ENCODE measurements at regions of chr20 and their contacts with region 1.

Region 1: DNA sequence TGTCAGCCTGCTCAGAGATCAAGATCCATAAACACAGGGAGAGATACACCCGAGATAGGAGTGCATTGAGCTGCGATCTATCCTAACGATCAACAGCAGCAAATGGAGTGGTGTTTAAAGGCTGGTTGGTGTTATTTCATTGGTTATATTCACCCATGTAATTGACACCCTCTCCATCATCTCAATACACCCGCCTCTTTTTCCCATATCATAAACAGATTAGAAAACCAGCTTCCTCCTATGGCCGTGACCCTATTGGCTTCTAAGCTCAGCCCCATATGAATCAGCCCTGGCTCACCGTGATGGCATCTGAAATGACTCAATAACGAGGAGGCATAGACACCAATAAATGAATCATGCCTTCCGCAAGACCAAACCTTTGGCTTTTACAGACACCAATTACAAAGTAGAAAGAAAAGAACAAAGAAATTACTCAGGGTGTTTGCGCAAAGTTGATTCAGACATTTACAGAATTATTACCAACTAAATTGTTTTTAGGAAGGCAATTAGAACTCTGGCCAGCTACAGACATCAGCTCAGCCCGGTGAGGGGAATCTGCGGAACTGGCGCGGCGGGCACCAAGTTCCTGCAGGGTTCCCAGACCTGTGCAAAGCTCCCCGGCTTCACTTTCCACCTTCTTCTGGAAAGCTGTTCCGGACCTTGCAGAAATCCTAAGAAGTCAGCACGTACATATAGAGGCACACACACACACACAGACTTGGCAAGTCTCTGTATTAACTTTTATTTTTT is 11.5 kb downstream of the PMEPA1 start:
- DNase-seq: no peak
- H3K4me3 ChIP-seq: no peak overlapping the region
- H3K27ac ChIP-seq: no peak overlapping the region
- H3K4me1 ChIP-seq: peaks cover 0 to 14% (median 0%) of the 10 kb centered on the region in 4 experiments
- H3K27me3 ChIP-seq: no peaks in the 10 kb centered on the region

Region 2: GRCh38 chr20:57498425-57499400 is 199.6 kb before region 1 on chr20:
- CTCF ChIA-PET with region 1: no interaction called
- POLR2A ChIA-PET with region 1: no interaction called
- DNase-seq: peak; percentile 49 to 73 (median 64)
- H3K4me3 ChIP-seq: peak overlapping the region in 2 of 7 experiments; percentile 39 to 56
- H3K27ac ChIP-seq: no peak overlapping the region
- H3K4me1 ChIP-seq: peaks cover 11 to 23% (median 14%) of the 10 kb centered on the region in 4 experiments
- H3K27me3 ChIP-seq: peaks cover 9 to 28% (median 15%) of the 10 kb centered on the region in 5 experiments

Region 3: DNA sequence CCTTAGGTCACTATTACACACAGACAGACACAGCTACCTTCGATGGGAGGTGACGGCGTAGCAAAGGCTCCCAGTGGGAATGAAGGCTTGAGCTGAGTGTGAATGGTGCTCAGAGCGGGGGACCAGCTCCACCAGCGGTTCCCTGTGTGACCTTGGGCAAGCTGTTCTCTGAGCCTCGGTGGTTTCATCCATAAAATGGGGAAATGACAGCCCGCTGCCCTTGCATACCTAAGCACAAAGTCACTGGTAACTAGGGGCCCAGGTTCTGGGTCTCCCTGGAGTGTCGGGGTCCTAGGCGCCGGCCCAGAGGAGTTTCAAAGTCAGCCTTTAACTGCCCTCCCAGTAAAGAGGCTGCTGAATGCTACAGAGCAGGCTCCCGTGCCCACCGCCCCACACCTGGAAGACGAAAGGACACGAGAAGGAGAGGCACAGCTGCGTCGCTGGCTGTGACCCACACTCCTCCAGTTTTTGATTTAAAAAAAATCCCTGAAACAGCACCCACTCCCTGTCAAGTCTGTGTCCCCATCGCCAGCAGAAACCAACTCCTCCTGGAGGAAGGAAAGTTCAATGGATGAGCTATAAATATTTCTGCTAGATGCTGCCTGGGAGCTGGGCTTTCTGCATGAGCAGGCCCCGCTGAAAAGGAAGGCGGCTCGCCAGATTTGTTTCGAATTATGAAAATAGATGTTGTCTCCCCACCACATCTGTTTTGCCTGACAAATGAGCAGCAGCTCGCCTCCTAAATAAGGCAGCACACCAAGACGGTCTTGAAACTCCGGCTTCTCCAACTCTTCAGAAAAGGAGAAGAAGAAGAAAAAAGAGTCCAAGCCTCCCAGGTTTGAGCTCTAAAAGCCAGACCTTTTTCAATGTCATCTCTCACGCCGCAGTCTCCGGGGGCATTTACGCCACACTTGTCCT is 15.8 kb before region 1 on chr20:
- CTCF ChIA-PET with region 1: interaction called, 10 read pairs
- POLR2A ChIA-PET with region 1: interaction called, 3 read pairs
- DNase-seq: no peak
- H3K4me3 ChIP-seq: no peak overlapping the region
- H3K27ac ChIP-seq: no peak overlapping the region
- H3K4me1 ChIP-seq: peaks cover 4 to 30% (median 28%) of the 10 kb centered on the region in 4 experiments
- H3K27me3 ChIP-seq: no peaks in the 10 kb centered on the region

Region 4: GRCh38 chr20:57709931-57710799 is 11.9 kb after region 1 on chr20 and contains the start of gene PMEPA1:
- CTCF ChIA-PET with region 1: interaction called, 11 read pairs
- POLR2A ChIA-PET with region 1: interaction called, 5 read pairs
- DNase-seq: peak; percentile 94 to 97 (median 96)
- H3K4me3 ChIP-seq: peak within 1 kb of the TSS; percentile 71 to 96 (median 85)
- H3K27ac ChIP-seq: peak within 1 kb of the TSS in 1 of 2 experiments; percentile 34
- H3K4me1 ChIP-seq: peaks cover 6 to 30% (median 20%) of the 10 kb centered on the region in 4 experiments
- H3K27me3 ChIP-seq: peaks cover 0 to 14% (median 2%) of the 10 kb centered on the region in 5 experiments